CD14-positive monocyte (primary cell): ENCODE measurements at regions of chr5 and their contacts with region 1.

Region 1: GRCh38 chr5:140609126-140609525 is 23.8 kb downstream of the CD14 start:
- DNase-seq: peak; percentile 77 to 88 (median 87)
- H3K4me3 ChIP-seq: peak overlapping the region; percentile 8 to 65 (median 12)
- H3K4me3 Mint-ChIP-seq: peak overlapping the region; percentile 51 to 78
- H3K27ac ChIP-seq: peak overlapping the region; percentile 94 to 96
- H3K27ac Mint-ChIP-seq: peak overlapping the region; percentile 90 to 100 (median 98)
- H3K4me1 ChIP-seq: peaks cover 86 to 98% of the 10 kb centered on the region in 2 donors
- H3K4me1 Mint-ChIP-seq: peaks cover 86% of the 10 kb centered on the region
- H3K27me3 ChIP-seq: no peaks in the 10 kb centered on the region
- H3K27me3 Mint-ChIP-seq: no peaks in the 10 kb centered on the region
- CTCF ChIP-seq: no peak

Region 2: DNA sequence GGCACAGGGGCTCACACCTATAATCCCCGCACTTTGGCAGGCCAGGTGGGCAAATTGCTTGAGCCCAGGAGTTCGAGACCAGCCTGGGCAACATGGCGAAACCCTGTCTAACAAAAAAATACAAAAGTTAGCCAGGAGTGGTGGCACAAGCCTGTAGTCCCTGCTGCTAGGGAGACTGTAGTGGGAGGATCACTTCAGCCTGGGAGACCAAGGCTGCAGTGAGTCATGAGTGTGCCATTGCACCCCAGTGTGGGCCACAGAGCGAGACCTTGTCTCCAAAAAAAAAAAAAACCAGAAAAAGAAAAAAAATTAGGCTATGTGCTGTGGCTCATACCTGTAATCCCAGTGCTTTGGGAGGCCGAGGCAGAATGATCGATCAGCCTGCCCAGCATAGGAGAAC is 120.2 kb before region 1 on chr5:
- intact Hi-C with region 1: no loop called
- DNase-seq: no peak
- H3K4me3 ChIP-seq: no peak overlapping the region
- H3K4me3 Mint-ChIP-seq: no peak overlapping the region
- H3K27ac ChIP-seq: no peak overlapping the region
- H3K27ac Mint-ChIP-seq: peak overlapping the region in 2 of 7 donors; percentile 23 to 45
- H3K4me1 ChIP-seq: no peaks in the 10 kb centered on the region
- H3K4me1 Mint-ChIP-seq: no peaks in the 10 kb centered on the region
- H3K27me3 ChIP-seq: no peaks in the 10 kb centered on the region
- H3K27me3 Mint-ChIP-seq: no peaks in the 10 kb centered on the region
- CTCF ChIP-seq: no peak

Region 3: GRCh38 chr5:140575309-140575708 is 33.8 kb before region 1 on chr5:
- intact Hi-C with region 1: loop called in 1 of 2 experiments (anchors 5 kb)
- DNase-seq: peak; percentile 71 to 82 (median 71)
- H3K4me3 ChIP-seq: no peak overlapping the region
- H3K4me3 Mint-ChIP-seq: no peak overlapping the region
- H3K27ac ChIP-seq: peak overlapping the region in 1 of 2 donors; percentile 39
- H3K27ac Mint-ChIP-seq: peak overlapping the region in 6 of 7 donors; percentile 14 to 87 (median 66)
- H3K4me1 ChIP-seq: peaks cover 22 to 42% of the 10 kb centered on the region in 2 donors
- H3K4me1 Mint-ChIP-seq: peaks cover 35% of the 10 kb centered on the region
- H3K27me3 ChIP-seq: no peaks in the 10 kb centered on the region
- H3K27me3 Mint-ChIP-seq: peaks cover 0 to 2% (median 2%) of the 10 kb centered on the region in 3 donors
- CTCF ChIP-seq: peak; percentile 84

Region 4: DNA sequence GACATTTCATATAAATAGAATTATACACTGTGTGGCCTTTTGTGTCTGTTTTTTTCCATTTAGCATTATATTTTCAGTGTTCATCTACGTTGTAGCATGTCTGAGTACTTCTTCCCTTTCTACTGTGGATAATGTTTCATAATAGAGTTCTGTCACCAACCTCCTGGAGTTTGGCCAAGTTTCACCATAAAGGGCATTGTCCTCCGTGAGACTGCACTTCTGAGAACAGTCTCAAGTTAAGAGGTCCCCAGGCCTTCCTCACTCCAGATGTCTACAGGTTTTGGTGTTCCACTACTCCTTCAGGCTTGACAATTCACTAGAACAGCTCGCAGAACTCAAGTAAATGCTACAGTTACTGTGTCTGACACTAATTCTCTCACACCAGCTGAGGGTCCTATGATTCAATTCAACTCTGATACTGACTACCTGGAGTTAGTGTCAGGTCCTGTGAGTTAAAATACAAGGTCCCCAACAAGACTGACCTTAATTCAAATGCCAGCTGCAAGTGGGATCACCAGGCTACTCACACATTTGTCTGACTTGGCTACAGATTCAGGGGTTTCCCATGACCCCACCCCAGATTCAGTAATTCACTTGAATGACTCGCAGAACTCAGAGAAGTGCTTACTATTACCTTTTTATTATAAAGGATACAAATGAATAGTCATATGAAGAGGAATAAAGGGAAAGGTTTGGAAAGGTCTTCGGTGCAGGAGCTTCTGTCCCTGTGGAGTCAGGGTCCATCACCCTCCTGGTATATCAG is 13.4 kb before region 1 on chr5:
- intact Hi-C with region 1: loop called in 1 of 2 experiments (anchors 2 kb)
- DNase-seq: peak; percentile 92 to 97 (median 95)
- H3K4me3 ChIP-seq: peak overlapping the region in 1 of 3 experiments; percentile 52
- H3K4me3 Mint-ChIP-seq: peak overlapping the region; percentile 49 to 72
- H3K27ac ChIP-seq: peak overlapping the region; percentile 96 to 97
- H3K27ac Mint-ChIP-seq: peak overlapping the region; percentile 95 to 99 (median 97)
- H3K4me1 ChIP-seq: peaks cover 74 to 89% of the 10 kb centered on the region in 2 donors
- H3K4me1 Mint-ChIP-seq: peaks cover 72% of the 10 kb centered on the region
- H3K27me3 ChIP-seq: no peaks in the 10 kb centered on the region
- H3K27me3 Mint-ChIP-seq: no peaks in the 10 kb centered on the region
- CTCF ChIP-seq: no peak